Mammary epithelial cell (primary cell): ENCODE measurements at regions of chrX and their contacts with region 1.

Region 1: GRCh38 chrX:107776649-107777535 is 641 bp upstream of the NCBP2L start:
- DNase-seq: peak; percentile 84
- H3K4me3 ChIP-seq: peak overlapping the region; percentile 47 to 60 (median 54)
- H3K27ac ChIP-seq: no peak overlapping the region
- H3K4me1 ChIP-seq: peaks cover 9% of the 10 kb centered on the region
- H3K27me3 ChIP-seq: no peaks in the 10 kb centered on the region
- CTCF ChIP-seq: peak; percentile 81 to 87

Region 2: GRCh38 chrX:107025545-107025944 is 751.3 kb before region 1 on chrX:
- CTCF ChIA-PET with region 1: no interaction called
- dilution Hi-C with region 1: no loop called
- in situ Hi-C with region 1: no loop called
- intact Hi-C with region 1: loop called (anchors 5 kb)
- DNase-seq: peak; percentile 6
- H3K4me3 ChIP-seq: no peak overlapping the region
- H3K27ac ChIP-seq: no peak overlapping the region
- H3K4me1 ChIP-seq: no peaks in the 10 kb centered on the region
- H3K27me3 ChIP-seq: peaks cover 4% of the 10 kb centered on the region
- CTCF ChIP-seq: peak; percentile 54 to 72

Region 3: DNA sequence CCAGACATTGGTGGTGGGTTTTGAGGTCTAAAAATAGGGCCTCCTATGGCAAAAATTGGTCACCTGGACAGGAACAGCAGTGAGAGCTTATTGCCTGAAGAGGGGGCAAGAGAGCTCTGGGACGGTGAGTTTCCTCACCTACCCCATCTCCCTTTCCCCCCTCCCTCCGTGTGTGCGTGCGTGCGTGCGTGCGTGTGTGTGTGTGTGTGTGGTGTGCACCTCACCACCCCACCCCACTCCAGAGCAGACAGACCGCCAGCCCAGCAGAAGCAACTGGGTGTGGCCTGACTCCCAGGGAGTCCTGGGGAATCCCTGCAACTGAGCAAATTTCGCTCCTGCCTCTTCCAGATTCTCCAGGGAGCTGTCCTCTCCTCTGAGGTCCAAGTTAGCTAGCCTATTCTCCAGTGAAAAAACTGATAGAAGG is 103.9 kb before region 1 on chrX:
- CTCF ChIA-PET with region 1: interaction called, 3 read pairs
- dilution Hi-C with region 1: loop called (anchors 5 kb)
- in situ Hi-C with region 1: loop called (anchors 10 kb)
- intact Hi-C with region 1: loop called (anchors 1 kb)
- DNase-seq: peak; percentile 66
- H3K4me3 ChIP-seq: no peak overlapping the region
- H3K27ac ChIP-seq: peak overlapping the region; percentile 98
- H3K4me1 ChIP-seq: peaks cover 25% of the 10 kb centered on the region
- H3K27me3 ChIP-seq: peaks cover 3% of the 10 kb centered on the region
- CTCF ChIP-seq: peak; percentile 65 to 76

Region 4: GRCh38 chrX:107826238-107827029 is 49.5 kb after region 1 on chrX:
- CTCF ChIA-PET with region 1: no interaction called
- dilution Hi-C with region 1: no loop called
- in situ Hi-C with region 1: no loop called
- intact Hi-C with region 1: loop called (anchors 1 kb)
- DNase-seq: peak; percentile 41
- H3K4me3 ChIP-seq: peak overlapping the region; percentile 45 to 60 (median 58)
- H3K27ac ChIP-seq: peak overlapping the region; percentile 41
- H3K4me1 ChIP-seq: no peaks in the 10 kb centered on the region
- H3K27me3 ChIP-seq: peaks cover under 1% of the 10 kb centered on the region
- CTCF ChIP-seq: no peak

Region 5: GRCh38 chrX:108070891-108071290 is 294.0 kb after region 1 on chrX:
- CTCF ChIA-PET with region 1: no interaction called
- dilution Hi-C with region 1: no loop called
- in situ Hi-C with region 1: no loop called
- intact Hi-C with region 1: loop called (anchors 1 kb)
- DNase-seq: peak; percentile 89
- H3K4me3 ChIP-seq: no peak overlapping the region
- H3K27ac ChIP-seq: peak overlapping the region; percentile 39
- H3K4me1 ChIP-seq: peaks cover 24% of the 10 kb centered on the region
- H3K27me3 ChIP-seq: no peaks in the 10 kb centered on the region
- CTCF ChIP-seq: no peak

Region 6: GRCh38 chrX:108224727-108225621 is 448.1 kb after region 1 on chrX:
- CTCF ChIA-PET with region 1: no interaction called
- dilution Hi-C with region 1: no loop called
- in situ Hi-C with region 1: no loop called
- intact Hi-C with region 1: no loop called
- DNase-seq: peak; percentile 57
- H3K4me3 ChIP-seq: no peak overlapping the region
- H3K27ac ChIP-seq: peak overlapping the region; percentile 16
- H3K4me1 ChIP-seq: peaks cover 8% of the 10 kb centered on the region
- H3K27me3 ChIP-seq: no peaks in the 10 kb centered on the region
- CTCF ChIP-seq: peak; percentile 67 to 78